ENCODE measurements at regions of chr6 and their contacts with region 1.

Region 1: GRCh38 chr6:122530440-122531046 is 58.9 kb upstream of the SERINC1 start:
- DNase-seq: peak; percentile 73
- ATAC-seq: peak; percentile 88
- H3K4me3 ChIP-seq: no peak overlapping the region
- H3K4me3 Mint-ChIP-seq: no peak overlapping the region
- H3K27ac ChIP-seq: no peak overlapping the region
- H3K27ac Mint-ChIP-seq: no peak overlapping the region
- H3K4me1 ChIP-seq: no peaks in the 10 kb centered on the region
- H3K4me1 Mint-ChIP-seq: no peaks in the 10 kb centered on the region
- H3K27me3 ChIP-seq: peaks cover 0 to 12% (median 2%) of the 10 kb centered on the region in 4 experiments
- H3K27me3 Mint-ChIP-seq: peaks cover 26% of the 10 kb centered on the region
- CTCF ChIP-seq: peak; percentile 91

Region 2: DNA sequence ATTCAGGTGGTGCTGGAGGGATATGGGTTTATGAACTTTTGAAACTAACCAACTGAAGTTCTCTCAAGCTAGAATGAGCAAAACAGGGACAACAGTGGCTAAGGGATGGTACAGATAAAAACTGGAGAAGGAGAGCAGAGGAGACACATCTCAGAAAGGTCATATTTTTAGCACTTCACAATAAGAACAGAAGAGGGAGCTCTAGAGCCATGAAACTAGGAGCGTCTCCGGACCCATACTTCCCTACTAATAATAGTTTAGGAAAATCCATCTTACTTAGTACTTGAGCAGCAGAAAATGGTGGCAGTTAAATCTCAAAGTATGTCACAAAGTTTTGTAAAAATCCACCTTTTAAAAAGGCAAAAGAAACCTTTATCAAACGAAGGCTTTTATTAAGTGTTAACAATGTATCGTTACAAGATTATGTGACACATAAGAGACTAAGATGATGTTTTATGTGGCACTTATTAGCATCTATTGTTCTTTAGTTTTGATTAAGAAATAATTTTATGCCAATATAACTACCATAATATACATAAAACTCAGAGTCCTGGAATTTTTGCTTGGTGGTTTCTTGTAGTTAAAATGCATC is 1474.9 kb before region 1 on chr6:
- CTCF ChIA-PET with region 1: interaction called, 21 read pairs
- POLR2A ChIA-PET with region 1: no interaction called
- intact Hi-C with region 1: no loop called
- DNase-seq: peak; percentile 48
- ATAC-seq: peak; percentile 33
- H3K4me3 ChIP-seq: no peak overlapping the region
- H3K4me3 Mint-ChIP-seq: no peak overlapping the region
- H3K27ac ChIP-seq: no peak overlapping the region
- H3K27ac Mint-ChIP-seq: no peak overlapping the region
- H3K4me1 ChIP-seq: no peaks in the 10 kb centered on the region
- H3K4me1 Mint-ChIP-seq: peaks cover 4% of the 10 kb centered on the region
- H3K27me3 ChIP-seq: no peaks in the 10 kb centered on the region
- H3K27me3 Mint-ChIP-seq: no peaks in the 10 kb centered on the region
- CTCF ChIP-seq: peak; percentile 85

Region 3: DNA sequence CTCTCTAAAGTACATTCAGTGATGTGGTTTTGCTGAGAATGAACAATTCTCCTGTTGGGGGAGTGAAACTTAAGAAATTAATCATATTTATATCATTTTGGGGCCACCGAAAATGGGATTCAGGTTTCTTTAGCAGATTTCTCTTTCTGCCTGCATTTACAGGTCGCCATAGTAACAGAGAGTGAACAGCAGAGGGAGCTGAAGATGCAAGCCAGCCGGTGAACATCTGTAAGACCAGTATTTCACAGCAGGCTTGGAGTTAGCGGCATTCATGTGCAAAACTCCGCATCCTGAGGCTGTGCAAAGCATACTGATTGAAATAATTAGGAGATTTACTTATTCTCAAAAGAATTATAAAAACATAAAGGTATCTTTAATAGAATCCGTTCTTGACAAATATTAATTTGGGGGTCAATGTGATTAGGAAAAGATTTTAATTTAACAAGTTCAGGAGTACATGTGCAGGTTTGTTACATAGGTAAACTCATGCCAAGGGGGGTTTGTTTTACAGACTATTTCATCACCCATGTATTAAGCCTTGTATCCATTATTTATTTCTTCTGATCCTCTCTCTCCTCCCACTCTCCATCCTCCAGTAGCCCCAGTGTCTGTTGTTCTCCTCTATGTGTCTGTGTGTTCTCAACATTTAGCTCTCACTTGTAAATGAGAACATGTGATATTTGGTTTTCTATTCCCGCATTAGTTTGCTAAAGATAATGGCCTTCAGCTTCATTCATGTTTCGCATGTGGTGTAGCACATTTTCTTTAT is 148.9 kb before region 1 on chr6:
- CTCF ChIA-PET with region 1: interaction called, 116 read pairs
- POLR2A ChIA-PET with region 1: no interaction called
- intact Hi-C with region 1: no loop called
- DNase-seq: peak; percentile 70
- ATAC-seq: peak; percentile 69
- H3K4me3 ChIP-seq: no peak overlapping the region
- H3K4me3 Mint-ChIP-seq: no peak overlapping the region
- H3K27ac ChIP-seq: no peak overlapping the region
- H3K27ac Mint-ChIP-seq: no peak overlapping the region
- H3K4me1 ChIP-seq: no peaks in the 10 kb centered on the region
- H3K4me1 Mint-ChIP-seq: peaks cover under 1% of the 10 kb centered on the region
- H3K27me3 ChIP-seq: no peaks in the 10 kb centered on the region
- H3K27me3 Mint-ChIP-seq: peaks cover 19% of the 10 kb centered on the region
- CTCF ChIP-seq: peak; percentile 87

Region 4: DNA sequence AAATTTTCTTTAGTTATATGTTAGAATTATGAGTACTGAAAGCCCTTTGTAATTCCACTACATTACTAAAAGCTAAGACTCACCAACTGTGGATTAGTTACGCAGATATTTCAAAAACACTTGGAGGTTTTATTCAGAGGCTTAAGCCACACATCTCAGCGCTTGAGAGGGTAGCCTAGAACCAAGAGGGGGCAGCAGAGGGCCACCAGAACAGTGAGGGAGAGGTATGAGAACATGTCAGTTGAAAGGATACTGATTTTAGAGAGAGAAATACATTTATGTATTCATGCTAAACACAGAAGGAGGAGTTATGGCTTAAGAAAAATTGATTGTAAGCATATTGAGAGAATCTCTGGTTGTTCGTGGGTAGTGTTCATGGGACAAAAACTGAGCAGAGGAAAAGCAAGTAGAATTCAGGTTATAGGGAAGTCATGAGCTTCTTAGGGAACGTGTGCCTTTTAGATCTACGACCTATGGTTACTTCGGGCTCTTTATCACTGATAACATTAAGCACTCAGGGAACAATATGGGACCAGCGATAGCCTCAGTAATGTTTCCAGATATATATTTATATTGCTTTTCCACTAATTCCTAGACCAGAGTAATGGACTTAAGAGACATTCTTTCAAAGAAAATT is 38.5 kb before region 1 on chr6:
- CTCF ChIA-PET with region 1: interaction called, 193 read pairs
- POLR2A ChIA-PET with region 1: no interaction called
- intact Hi-C with region 1: loop called (anchors 1 kb)
- DNase-seq: peak; percentile 72
- ATAC-seq: peak; percentile 93
- H3K4me3 ChIP-seq: no peak overlapping the region
- H3K4me3 Mint-ChIP-seq: peak overlapping the region; percentile 2
- H3K27ac ChIP-seq: no peak overlapping the region
- H3K27ac Mint-ChIP-seq: no peak overlapping the region
- H3K4me1 ChIP-seq: peaks cover 5 to 10% of the 10 kb centered on the region in 2 donors
- H3K4me1 Mint-ChIP-seq: peaks cover 12% of the 10 kb centered on the region
- H3K27me3 ChIP-seq: no peaks in the 10 kb centered on the region
- H3K27me3 Mint-ChIP-seq: no peaks in the 10 kb centered on the region
- CTCF ChIP-seq: peak; percentile 97

Region 5: DNA sequence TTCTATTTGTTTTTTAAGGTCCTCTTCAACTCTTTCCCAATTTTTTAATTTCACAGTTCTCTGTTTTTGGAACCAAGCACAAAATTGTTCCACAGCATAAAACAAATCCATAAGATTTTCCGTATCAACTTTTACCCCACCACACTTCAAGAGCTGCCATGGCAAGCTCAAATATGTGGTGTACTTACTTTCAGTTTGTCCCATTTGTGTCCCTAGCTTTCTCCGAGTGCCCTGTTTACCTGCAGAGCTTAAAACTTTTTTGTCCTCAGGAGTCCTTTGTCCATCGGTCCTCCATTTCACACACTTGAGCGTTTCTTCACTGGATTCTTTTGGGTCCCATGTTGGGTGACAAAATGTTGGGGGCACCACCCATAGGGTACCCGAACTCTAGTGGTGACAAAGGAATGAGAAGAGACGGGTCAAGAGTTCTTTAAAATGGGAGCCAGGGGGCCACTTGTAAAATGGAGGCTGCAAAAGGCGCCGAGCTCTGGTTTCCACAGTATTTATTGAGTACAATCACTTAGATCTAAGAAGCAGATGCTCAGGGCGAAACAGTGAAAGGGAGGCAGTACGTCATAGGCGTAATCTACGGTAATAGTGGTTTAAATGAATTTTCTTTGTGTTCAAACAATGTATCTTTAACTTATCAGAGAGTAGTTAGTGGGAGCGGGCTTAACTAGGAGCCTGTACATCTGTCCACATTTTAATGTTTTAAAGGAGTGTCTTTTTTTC is 19.2 kb before region 1 on chr6:
- CTCF ChIA-PET with region 1: interaction called, 15 read pairs
- POLR2A ChIA-PET with region 1: no interaction called
- intact Hi-C with region 1: no loop called
- DNase-seq: no peak
- ATAC-seq: no peak
- H3K4me3 ChIP-seq: no peak overlapping the region
- H3K4me3 Mint-ChIP-seq: no peak overlapping the region
- H3K27ac ChIP-seq: no peak overlapping the region
- H3K27ac Mint-ChIP-seq: no peak overlapping the region
- H3K4me1 ChIP-seq: no peaks in the 10 kb centered on the region
- H3K4me1 Mint-ChIP-seq: no peaks in the 10 kb centered on the region
- H3K27me3 ChIP-seq: no peaks in the 10 kb centered on the region
- H3K27me3 Mint-ChIP-seq: peaks cover 2% of the 10 kb centered on the region
- CTCF ChIP-seq: no peak

Region 6: GRCh38 chr6:122520179-122520578 is 10.4 kb before region 1 on chr6:
- CTCF ChIA-PET with region 1: interaction called, 26 read pairs
- POLR2A ChIA-PET with region 1: no interaction called
- intact Hi-C with region 1: no loop called
- DNase-seq: no peak
- ATAC-seq: no peak
- H3K4me3 ChIP-seq: no peak overlapping the region
- H3K4me3 Mint-ChIP-seq: no peak overlapping the region
- H3K27ac ChIP-seq: no peak overlapping the region
- H3K27ac Mint-ChIP-seq: no peak overlapping the region
- H3K4me1 ChIP-seq: no peaks in the 10 kb centered on the region
- H3K4me1 Mint-ChIP-seq: no peaks in the 10 kb centered on the region
- H3K27me3 ChIP-seq: no peaks in the 10 kb centered on the region
- H3K27me3 Mint-ChIP-seq: peaks cover 18% of the 10 kb centered on the region
- CTCF ChIP-seq: no peak

Measured in B cell (primary cell).